Activated CD8-positive, alpha-beta T cell treated with anti-CD3 and anti-CD28 coated beads, Interleukin-2, amount 10 ng/mL, durations not matched to agents 7 days and 5 days (primary cell): ENCODE measurements at regions of chr19 and their contacts with region 1.

Region 1: GRCh38 chr19:38929929-38930775 is at the start of gene SARS2:
- DNase-seq: peak; percentile 94
- ATAC-seq: peak; percentile 68
- H3K4me3 Mint-ChIP-seq: peak within 1 kb of the TSS; percentile 98
- H3K27ac Mint-ChIP-seq: peak within 1 kb of the TSS; percentile 99
- H3K4me1 Mint-ChIP-seq: peaks cover 31% of the 10 kb centered on the region
- H3K27me3 Mint-ChIP-seq: no peaks in the 10 kb centered on the region
- total RNA-seq, gene SARS2: 36.2 to 36.6 TPM

Region 2: DNA sequence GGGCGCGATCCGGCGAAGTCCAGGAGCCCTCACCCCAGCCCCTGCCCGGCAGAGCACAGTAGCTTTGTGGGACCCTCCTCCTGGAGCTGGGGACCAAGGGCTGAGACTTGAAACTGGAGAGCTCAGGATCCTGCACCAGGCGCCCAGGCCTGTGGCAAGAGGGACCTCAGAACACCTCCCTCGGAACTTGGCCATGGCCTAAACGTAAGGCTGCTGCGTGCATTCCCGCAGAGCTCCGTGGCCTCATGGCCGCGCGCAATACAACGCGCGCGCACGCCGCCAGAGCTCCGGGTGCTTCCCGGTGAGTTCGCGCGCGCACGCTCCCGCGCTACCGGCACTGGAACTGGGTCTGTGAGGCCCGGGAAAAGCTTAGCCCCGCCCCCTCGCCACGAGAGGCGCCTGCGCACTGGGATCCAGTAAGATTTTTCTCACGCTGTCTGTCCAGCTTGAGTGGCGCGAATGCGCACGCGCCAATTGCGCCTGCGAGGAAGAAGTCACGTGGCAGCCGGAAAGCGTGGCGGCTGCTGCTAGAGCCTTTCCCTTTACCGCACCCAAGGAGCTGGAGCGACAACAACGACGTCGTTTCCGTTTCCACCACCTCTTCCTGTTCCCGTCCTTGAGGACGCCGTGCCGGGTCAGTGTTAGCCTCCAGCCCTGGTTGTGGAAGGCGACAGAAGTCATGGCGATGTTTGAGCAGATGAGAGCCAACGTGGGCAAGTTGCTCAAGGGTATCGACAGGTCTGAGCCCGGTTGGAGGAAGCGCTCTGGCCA is 311.4 kb before region 1 on chr19 and contains the start of gene EIF3K:
- CTCF ChIA-PET with region 1: interaction called, 14 read pairs
- POLR2A ChIA-PET with region 1: no interaction called
- DNase-seq: peak; percentile 98
- ATAC-seq: peak; percentile 58
- H3K4me3 Mint-ChIP-seq: peak within 1 kb of the TSS; percentile 100
- H3K27ac Mint-ChIP-seq: peak within 1 kb of the TSS; percentile 99
- H3K4me1 Mint-ChIP-seq: peaks cover 53% of the 10 kb centered on the region
- H3K27me3 Mint-ChIP-seq: no peaks in the 10 kb centered on the region
- total RNA-seq, gene EIF3K: 325 to 352 TPM

Region 3: DNA sequence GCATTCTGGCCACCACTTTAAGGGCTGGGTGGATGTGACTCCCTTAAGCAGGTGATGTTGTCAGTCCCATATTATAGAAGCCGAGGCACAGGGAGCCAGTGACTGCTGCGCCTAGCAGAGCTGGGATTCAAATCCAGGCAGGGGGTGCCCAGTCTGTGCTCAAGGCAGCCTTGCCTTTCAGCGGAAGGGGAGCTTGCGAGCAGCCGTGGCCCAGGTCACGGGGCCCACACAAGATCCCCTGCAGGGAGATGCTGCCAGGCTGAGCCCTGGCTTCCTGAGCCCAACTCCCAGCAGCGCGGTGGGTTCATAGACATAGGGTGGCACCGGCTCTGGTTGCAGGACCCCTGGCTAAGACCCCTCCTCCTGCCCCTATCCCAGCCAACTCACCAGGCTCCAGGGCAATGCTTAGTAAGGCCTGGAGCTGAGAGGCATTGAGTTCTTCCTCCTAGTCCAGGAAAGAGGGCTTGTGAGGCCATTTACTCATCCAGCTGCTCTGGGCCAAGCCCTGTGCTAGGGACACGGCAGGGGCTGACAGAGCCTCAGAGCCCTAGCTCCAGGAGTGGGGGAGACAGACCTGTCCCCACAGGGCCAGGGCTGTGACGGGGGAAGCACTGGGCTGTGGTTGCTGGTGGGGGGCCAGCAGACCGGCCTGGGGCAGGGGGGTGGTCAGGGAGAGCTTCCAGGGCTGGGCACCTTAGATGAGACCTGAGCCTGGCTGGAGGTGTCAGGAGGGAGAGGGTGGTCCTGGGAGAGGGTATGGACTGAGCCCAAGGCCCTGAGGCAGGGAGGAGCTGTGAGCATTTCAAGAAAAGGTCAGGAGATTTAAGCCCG is 195.5 kb before region 1 on chr19:
- CTCF ChIA-PET with region 1: interaction called, 25 read pairs
- POLR2A ChIA-PET with region 1: interaction called, 3 read pairs
- DNase-seq: peak; percentile 71
- ATAC-seq: peak; percentile 35
- H3K4me3 Mint-ChIP-seq: peak overlapping the region; percentile 79
- H3K27ac Mint-ChIP-seq: peak overlapping the region; percentile 88
- H3K4me1 Mint-ChIP-seq: peaks cover 56% of the 10 kb centered on the region
- H3K27me3 Mint-ChIP-seq: peaks cover 4% of the 10 kb centered on the region

Region 4: DNA sequence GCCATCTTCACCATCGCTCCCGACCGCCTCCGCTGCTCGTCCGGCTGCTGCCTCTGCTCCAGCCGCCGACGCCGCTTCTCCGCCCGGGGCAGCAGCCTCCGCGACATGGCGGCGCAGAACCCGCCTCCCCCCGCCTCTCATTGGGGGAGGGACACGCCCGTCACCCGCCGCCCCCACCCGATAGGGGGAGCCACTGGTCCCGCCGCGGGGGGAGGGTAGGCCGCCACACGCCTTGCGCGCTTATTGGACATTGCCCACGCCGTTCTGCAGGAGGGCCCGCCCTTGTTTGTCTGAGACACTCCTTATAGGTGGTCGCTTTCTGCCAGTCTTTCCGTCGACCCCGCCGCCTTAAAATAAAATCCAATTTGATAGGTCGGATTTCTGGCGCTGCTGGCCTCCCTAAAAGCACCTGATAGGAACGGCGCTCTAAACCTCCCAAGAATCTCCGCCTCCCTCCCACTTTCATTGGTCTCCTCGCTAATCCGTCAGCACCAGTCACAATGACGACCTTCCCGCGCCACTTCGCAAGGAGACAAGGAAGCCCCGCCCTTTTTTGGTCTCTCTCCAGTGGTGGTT is 80.2 kb before region 1 on chr19 and contains the start of gene HNRNPL:
- CTCF ChIA-PET with region 1: interaction called, 17 read pairs
- POLR2A ChIA-PET with region 1: interaction called, 6 read pairs
- DNase-seq: peak; percentile 100
- ATAC-seq: peak; percentile 73
- H3K4me3 Mint-ChIP-seq: peak within 1 kb of the TSS; percentile 95
- H3K27ac Mint-ChIP-seq: peak within 1 kb of the TSS; percentile 100
- H3K4me1 Mint-ChIP-seq: peaks cover 52% of the 10 kb centered on the region
- H3K27me3 Mint-ChIP-seq: no peaks in the 10 kb centered on the region
- total RNA-seq, gene HNRNPL: 509 to 553 TPM

Region 5: DNA sequence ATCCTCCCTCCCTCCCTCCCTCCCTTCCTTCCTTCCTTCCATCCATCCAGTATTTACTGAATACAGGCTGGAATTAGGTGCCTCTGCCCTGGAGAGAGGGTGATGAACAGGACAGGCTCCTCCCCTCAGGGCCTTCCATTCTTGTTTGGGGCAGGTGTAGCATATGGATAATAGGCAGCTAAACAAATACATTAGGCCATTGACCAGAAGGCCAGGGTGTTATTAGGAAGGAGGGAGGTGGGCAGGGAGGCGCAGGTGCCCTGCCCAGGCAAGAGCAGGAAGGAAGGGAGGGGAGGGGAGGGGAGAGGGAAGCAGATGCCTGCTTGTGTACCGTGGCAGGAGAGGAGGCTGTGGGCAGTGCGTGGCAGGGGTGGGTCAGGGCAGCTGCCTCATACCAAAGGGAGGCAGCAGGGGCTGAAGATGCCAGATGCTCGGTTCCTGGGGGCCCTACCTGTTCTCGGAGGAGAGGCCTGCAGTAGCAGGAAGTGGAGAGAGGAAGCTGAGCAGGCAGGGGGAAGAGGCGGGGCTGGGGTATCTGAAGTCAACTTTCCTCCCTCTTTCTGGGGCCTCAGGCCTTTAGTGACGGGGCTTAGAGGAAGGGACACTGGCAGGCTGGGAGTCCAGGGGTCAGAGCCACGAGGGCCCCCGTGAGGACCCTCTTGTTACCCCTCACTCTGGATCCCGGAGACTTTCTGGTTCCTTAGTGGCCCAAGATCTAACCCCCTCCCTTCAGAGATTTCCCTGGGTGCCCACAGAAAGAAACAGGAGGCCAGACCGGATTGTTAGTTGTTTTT is 52.2 kb before region 1 on chr19 and contains the start of gene RINL:
- CTCF ChIA-PET with region 1: interaction called, 18 read pairs
- POLR2A ChIA-PET with region 1: interaction called, 6 read pairs
- DNase-seq: peak; percentile 84
- ATAC-seq: peak; percentile 92
- H3K4me3 Mint-ChIP-seq: peak within 1 kb of the TSS; percentile 95
- H3K27ac Mint-ChIP-seq: peak within 1 kb of the TSS; percentile 98
- H3K4me1 Mint-ChIP-seq: peaks cover 37% of the 10 kb centered on the region
- H3K27me3 Mint-ChIP-seq: no peaks in the 10 kb centered on the region
- total RNA-seq, gene RINL: 58.9 to 63.5 TPM

Region 6: GRCh38 chr19:38917516-38918491 is 12.3 kb before region 1 on chr19:
- CTCF ChIA-PET with region 1: interaction called, 18 read pairs
- POLR2A ChIA-PET with region 1: interaction called, 6 read pairs
- DNase-seq: no peak
- ATAC-seq: peak; percentile 42
- H3K4me3 Mint-ChIP-seq: no peak overlapping the region
- H3K27ac Mint-ChIP-seq: no peak overlapping the region
- H3K4me1 Mint-ChIP-seq: peaks cover 4% of the 10 kb centered on the region
- H3K27me3 Mint-ChIP-seq: no peaks in the 10 kb centered on the region

Region 7: DNA sequence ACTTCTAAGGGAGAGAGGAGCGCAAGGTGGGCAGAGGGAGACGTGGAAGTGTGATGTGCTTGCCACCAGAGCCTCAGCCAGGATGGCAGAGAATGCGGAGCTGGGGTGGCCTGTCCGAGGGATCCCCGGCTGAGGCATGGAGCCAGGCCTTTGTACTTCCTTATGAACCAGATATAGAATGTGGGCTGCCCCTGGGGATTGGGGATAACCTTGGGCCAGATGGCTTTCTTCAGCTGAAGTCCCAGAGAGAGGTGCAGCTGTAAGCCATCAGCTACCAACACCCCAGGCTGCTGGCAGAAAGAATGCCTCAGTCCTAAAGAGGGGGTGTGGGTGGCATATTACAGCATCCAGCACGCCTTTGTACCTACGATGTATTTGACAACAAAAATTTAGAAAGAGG is 70.9 kb after region 1 on chr19:
- CTCF ChIA-PET with region 1: no interaction called
- POLR2A ChIA-PET with region 1: no interaction called
- DNase-seq: no peak
- ATAC-seq: no peak
- H3K4me3 Mint-ChIP-seq: no peak overlapping the region
- H3K27ac Mint-ChIP-seq: no peak overlapping the region
- H3K4me1 Mint-ChIP-seq: peaks cover 4% of the 10 kb centered on the region
- H3K27me3 Mint-ChIP-seq: peaks cover 10% of the 10 kb centered on the region